ENCODE measurements at regions of chr10 and their contacts with region 1.

Region 1: GRCh38 chr10:95374597-95375209 is 83.9 kb upstream of the PDLIM1 start:
- DNase-seq: peak; percentile 10
- H3K4me3 ChIP-seq: no peak overlapping the region
- H3K27ac ChIP-seq: no peak overlapping the region
- H3K27me3 ChIP-seq: peaks cover 21% of the 10 kb centered on the region
- CTCF ChIP-seq: peak; percentile 70

Region 2: DNA sequence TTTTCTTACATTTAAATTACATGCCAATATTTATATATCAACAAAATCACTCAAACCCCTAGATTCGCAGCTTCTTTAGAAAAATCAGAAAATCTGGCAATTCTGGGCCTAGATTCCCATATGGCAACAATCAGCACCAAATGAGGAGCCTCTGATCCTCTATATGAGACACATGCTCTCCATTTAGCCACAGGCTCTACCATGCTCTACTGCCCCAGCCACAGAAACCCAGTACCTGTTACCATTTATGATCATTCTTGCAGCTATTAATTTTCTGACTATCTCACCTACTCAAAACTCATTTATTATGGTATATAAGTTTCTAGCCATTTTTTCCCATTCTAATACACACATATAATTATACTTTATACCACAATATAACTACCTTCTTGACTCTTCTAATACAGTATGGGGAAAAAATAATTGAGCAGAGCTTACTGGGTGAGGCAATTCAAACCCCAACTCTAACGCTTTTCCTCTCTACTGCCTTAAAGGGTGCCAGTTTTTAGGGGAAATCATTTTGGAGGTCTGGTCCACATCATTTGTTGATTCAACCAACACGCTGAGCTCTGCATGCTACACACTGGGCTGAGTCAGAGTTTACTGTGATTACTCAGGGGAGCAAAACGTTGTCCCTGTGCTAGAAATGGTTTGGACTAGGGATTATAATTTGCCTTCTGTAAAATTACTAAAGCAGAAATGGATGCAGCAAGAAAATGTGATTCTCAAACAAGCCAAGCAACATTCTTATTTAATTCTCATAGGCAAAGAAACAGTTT is 95.5 kb before region 1 on chr10:
- CTCF ChIA-PET with region 1: interaction called, 10 read pairs
- POLR2A ChIA-PET with region 1: no interaction called
- DNase-seq: no peak
- H3K4me3 ChIP-seq: no peak overlapping the region
- H3K27ac ChIP-seq: peak overlapping the region; percentile 77
- H3K27me3 ChIP-seq: no peaks in the 10 kb centered on the region
- CTCF ChIP-seq: no peak

Region 3: DNA sequence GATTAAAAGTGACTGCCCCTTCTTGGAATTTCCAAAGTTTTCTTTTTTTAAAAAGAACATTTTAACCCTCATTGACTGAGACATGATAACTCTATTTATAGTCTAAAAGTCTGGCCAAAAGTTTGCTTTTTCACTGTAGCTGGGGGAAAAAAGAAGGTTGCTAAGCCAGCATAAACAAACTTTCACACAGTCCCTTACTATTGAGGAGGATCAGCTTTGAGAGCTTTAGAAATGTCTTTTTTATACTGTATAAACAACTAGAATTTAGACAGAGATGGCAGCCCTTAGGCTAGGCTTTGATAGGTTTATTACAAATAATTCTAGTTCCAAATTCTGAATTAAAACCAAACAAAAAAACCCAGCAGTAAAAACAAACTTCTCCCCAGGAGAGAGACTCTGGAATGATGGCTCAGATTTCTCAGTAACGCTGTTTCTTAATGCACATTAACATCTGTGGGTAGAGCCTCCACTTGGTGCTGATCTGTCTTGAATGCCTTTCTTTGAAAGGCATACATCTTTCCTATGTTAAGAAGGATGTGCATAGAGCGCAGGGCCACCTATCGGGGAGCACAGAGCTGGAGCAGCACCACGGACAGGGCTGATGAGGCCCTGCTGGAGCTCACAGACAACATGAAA is 17.0 kb after region 1 on chr10:
- CTCF ChIA-PET with region 1: interaction called, 26 read pairs
- POLR2A ChIA-PET with region 1: no interaction called
- DNase-seq: peak; percentile 7
- H3K4me3 ChIP-seq: no peak overlapping the region
- H3K27ac ChIP-seq: no peak overlapping the region
- H3K27me3 ChIP-seq: peaks cover 2% of the 10 kb centered on the region
- CTCF ChIP-seq: peak; percentile 47

Region 4: DNA sequence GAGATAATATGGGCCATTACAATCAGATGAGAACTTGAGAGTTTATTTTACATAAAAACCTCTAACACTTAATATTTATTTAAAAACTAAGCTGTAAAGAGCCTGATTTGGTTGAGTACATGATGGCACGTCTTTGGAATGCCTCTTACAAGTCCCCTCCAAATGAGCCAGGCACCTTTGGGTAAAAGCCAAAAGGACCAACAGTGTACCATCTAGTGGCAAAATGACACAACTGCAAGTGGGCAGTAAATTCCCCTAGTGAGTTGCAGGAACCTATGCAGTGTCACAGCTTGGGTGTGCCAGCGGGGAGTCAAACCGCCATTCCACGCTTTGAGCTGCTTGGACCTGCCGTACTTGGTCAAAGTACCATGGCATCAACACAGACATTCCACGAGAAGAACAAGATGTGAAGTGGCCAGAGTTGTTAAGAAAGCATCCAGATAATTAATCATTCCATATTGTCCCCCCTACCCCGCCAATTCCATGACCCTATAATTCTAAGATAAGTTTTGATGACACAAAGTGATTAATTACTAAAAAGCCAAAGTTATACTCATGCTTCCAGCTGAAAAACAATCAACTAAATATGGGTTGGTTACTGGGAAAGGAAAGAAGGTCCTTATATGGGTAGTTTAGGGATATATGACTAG is 71.3 kb after region 1 on chr10:
- CTCF ChIA-PET with region 1: interaction called, 18 read pairs
- POLR2A ChIA-PET with region 1: no interaction called
- DNase-seq: peak; percentile 16
- H3K4me3 ChIP-seq: no peak overlapping the region
- H3K27ac ChIP-seq: no peak overlapping the region
- H3K27me3 ChIP-seq: peaks cover 8% of the 10 kb centered on the region
- CTCF ChIP-seq: peak; percentile 77

Region 5: GRCh38 chr10:95480102-95480900 is 105.6 kb after region 1 on chr10:
- CTCF ChIA-PET with region 1: no interaction called
- POLR2A ChIA-PET with region 1: no interaction called
- DNase-seq: no peak
- H3K4me3 ChIP-seq: no peak overlapping the region
- H3K27ac ChIP-seq: no peak overlapping the region
- H3K27me3 ChIP-seq: peaks cover 5% of the 10 kb centered on the region
- CTCF ChIP-seq: no peak

Measured in AG04450 (cell line).